Activated CD4-positive, alpha-beta memory T cell treated with anti-CD3 and anti-CD28 coated beads for 36 hours (primary cell): ENCODE measurements at regions of chr3 and their contacts with region 1.

Region 1: DNA sequence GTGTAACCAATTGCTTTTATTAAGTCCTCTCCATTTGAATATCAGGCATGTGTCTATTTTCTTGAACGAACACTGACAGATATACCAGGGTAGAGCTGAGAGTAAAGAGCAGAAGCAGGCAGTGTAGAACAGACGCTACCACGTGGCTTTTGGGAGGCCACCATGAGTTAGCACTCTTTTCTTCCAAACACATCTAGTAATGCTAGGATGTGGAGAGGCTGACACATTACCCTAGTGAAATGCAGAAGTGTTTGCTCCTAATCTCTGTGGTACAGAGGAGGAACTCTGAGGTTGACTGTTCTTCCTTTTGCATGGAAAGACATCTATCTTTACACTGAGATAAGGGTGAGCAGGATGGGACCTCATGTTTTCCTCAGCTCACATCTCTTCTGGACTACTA is 216.3 kb downstream of the SATB1 start:
- DNase-seq: peak; percentile 13
- H3K4me3 Mint-ChIP-seq: no peak overlapping the region
- H3K27ac Mint-ChIP-seq: no peak overlapping the region
- H3K4me1 Mint-ChIP-seq: peaks cover 18% of the 10 kb centered on the region
- H3K27me3 Mint-ChIP-seq: peaks cover 13% of the 10 kb centered on the region

Region 2: DNA sequence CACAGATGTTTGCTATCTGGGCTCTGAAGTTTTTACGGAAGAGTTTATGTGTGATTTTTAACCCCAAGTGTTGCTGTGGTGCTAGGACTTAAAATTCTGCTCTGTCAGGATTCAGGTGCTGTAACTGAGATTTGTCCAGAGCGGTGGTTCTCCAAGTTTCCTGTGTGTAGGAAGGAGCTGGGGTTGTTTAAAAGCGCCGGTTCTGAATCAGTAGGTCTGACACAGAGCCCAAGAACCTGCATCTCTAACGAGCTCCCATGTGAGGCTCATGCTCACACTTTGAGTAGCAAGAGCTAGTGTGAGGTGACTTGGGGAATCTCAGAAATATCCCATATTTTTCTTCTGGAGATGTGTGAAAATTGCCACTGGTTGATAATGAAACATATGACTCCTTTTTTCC is 109.2 kb before region 1 on chr3:
- CTCF ChIA-PET with region 1: no interaction called
- POLR2A ChIA-PET with region 1: no interaction called
- intact Hi-C with region 1: loop called (anchors 5 kb)
- DNase-seq: no peak
- H3K4me3 Mint-ChIP-seq: no peak overlapping the region
- H3K27ac Mint-ChIP-seq: peak overlapping the region; percentile 0
- H3K4me1 Mint-ChIP-seq: peaks cover 10% of the 10 kb centered on the region
- H3K27me3 Mint-ChIP-seq: peaks cover 15% of the 10 kb centered on the region

Region 3: GRCh38 chr3:18237251-18238005 is 28.6 kb after region 1 on chr3:
- CTCF ChIA-PET with region 1: no interaction called
- POLR2A ChIA-PET with region 1: no interaction called
- intact Hi-C with region 1: loop called (anchors 1 kb)
- DNase-seq: peak; percentile 14
- H3K4me3 Mint-ChIP-seq: no peak overlapping the region
- H3K27ac Mint-ChIP-seq: no peak overlapping the region
- H3K4me1 Mint-ChIP-seq: peaks cover 6% of the 10 kb centered on the region
- H3K27me3 Mint-ChIP-seq: peaks cover 24% of the 10 kb centered on the region